Endothelial cell of umbilical vein (primary cell): ENCODE measurements at regions of chr6 and their contacts with region 1.

Region 1: DNA sequence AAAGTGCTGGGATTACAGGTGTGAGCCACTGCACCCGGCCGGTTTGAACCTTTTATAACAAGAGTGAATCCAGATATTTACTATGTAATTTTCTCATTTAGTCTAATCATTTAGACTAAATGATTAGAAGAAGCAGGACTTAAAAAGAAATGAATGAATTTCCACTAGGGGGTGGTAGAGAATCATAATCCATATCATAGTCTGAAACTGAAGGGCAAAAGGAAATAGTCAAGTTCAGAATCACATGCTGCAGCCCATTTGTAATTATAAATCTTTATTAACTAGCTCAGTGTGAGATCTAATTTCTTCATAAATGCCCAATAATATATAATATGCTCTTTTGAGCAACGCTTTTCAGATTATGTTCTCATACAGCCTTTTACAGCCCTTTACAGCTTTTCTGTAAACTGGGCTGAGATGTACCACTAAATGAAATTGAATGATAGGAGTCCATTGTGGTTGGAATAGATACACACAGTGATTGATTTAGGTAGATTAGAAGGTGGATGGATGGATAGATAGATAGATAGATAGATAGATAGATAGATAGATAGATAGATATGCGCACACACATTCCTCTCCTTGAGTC is 31.8 kb downstream of the PSMB9 start:
- DNase-seq: peak; percentile 72
- H3K4me3 ChIP-seq: no peak overlapping the region
- H3K27ac ChIP-seq: no peak overlapping the region
- H3K4me1 ChIP-seq: peaks cover under 1% of the 10 kb centered on the region
- H3K27me3 ChIP-seq: peaks cover 28 to 30% of the 10 kb centered on the region in 2 experiments
- CTCF ChIP-seq: peak; percentile 34
- POLR2A ChIP-seq: no peak

Region 2: GRCh38 chr6:32581315-32582095 is 304.3 kb before region 1 on chr6:
- CTCF ChIA-PET with region 1: no interaction called
- POLR2A ChIA-PET with region 1: no interaction called
- dilution Hi-C with region 1: no loop called
- intact Hi-C with region 1: no loop called
- DNase-seq: no peak
- H3K4me3 ChIP-seq: no peak overlapping the region
- H3K27ac ChIP-seq: no peak overlapping the region
- H3K4me1 ChIP-seq: no peaks in the 10 kb centered on the region
- H3K27me3 ChIP-seq: peaks cover 0 to 3% of the 10 kb centered on the region in 2 experiments
- CTCF ChIP-seq: no peak
- POLR2A ChIP-seq: no peak

Region 3: DNA sequence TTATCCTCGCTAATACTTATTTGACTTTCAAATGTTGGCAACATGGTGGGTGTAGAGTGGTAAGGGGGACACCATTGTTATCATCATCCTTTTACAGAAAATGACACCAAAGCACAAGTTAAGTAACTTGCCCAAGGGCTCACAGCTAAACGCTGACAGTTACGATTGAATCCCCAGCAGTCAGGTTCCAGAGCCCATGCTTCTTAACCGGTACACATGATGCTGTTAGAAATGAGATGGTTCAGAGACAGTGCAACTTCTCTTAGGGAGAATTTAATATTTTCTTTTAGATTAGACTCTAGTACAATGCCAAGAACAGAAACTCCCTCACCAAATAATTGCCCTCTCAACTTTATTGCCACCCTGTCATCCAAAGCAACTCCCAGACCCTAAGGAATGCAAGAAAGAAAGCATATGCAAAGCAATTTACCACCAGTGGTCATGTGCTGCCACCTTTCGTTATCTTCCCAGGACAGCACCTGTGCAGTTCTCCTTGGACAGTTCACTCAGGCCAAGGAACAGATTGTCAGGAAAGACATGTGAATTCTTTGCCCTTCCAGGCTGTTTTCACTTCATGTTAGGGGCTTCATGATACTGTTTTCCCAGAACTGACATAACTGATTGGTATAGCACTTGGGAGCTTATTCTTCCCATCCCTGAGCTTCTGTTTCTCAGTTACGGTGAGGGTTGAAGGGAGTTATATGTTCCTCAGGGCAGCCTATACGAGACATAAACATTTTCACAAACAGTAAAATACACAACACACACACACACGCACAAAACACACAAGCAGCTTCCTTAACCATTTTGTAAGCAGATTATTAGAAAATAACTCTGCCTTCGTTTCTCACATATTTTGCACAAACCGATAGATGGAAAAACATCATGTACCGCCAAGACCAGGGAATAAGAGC is 62.0 kb after region 1 on chr6:
- CTCF ChIA-PET with region 1: interaction called, 29 read pairs
- POLR2A ChIA-PET with region 1: no interaction called
- dilution Hi-C with region 1: no loop called
- intact Hi-C with region 1: loop called (anchors 1 kb)
- DNase-seq: peak; percentile 58
- H3K4me3 ChIP-seq: no peak overlapping the region
- H3K27ac ChIP-seq: no peak overlapping the region
- H3K4me1 ChIP-seq: no peaks in the 10 kb centered on the region
- H3K27me3 ChIP-seq: peaks cover 5 to 28% of the 10 kb centered on the region in 2 experiments
- CTCF ChIP-seq: peak; percentile 34 to 39
- POLR2A ChIP-seq: no peak

Region 4: GRCh38 chr6:33147807-33148666 is 262.2 kb after region 1 on chr6:
- CTCF ChIA-PET with region 1: no interaction called
- POLR2A ChIA-PET with region 1: no interaction called
- dilution Hi-C with region 1: no loop called
- intact Hi-C with region 1: no loop called
- DNase-seq: peak; percentile 49
- H3K4me3 ChIP-seq: no peak overlapping the region
- H3K27ac ChIP-seq: no peak overlapping the region
- H3K4me1 ChIP-seq: no peaks in the 10 kb centered on the region
- H3K27me3 ChIP-seq: peaks cover 10 to 27% of the 10 kb centered on the region in 2 experiments
- CTCF ChIP-seq: peak; percentile 66 to 69
- POLR2A ChIP-seq: no peak

Region 5: DNA sequence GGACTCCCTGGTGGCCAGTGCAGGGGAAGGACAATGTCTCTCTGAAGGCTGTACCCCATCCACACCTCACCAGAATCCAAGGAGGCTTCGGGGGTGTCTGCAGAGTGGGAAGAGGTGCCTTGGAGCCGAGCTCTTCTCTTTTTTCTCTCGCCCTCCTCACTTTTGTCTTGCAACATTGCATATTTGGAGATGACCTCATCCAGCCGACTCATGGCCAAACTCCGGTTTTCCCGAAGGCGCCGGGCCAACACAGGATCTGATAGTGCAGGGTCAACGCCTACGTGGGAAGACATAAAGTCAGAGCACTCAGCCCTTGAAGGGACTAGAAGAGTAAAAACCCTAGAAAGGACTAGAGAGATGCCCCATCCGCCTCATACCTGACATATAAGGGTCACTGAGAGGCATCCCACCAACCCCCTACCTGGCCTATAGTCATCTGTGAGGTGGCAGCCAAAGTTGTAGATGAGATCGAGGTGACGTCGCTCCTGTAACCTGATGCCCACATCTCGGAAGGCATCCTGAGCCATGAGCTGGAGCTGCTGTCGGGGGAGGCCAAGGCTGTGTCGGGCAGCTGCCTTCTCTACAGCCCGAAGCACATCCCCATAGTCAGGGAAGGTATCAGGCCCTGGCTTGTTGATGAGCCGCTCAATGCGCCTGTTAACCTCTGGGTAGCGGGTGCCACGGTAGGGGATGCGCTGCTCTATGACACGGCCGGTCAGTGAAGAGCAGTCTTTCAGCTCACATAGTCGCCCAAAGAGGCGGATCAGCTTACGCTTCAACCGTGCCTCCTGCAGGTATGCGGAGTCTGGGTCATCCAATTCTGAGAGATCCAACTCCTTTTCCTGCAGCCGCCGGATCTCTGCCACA is 434.8 kb after region 1 on chr6:
- CTCF ChIA-PET with region 1: no interaction called
- POLR2A ChIA-PET with region 1: no interaction called
- dilution Hi-C with region 1: no loop called
- intact Hi-C with region 1: no loop called
- DNase-seq: peak; percentile 66
- H3K4me3 ChIP-seq: no peak overlapping the region
- H3K27ac ChIP-seq: peak overlapping the region; percentile 76
- H3K4me1 ChIP-seq: peaks cover 53% of the 10 kb centered on the region
- H3K27me3 ChIP-seq: no peaks in the 10 kb centered on the region
- CTCF ChIP-seq: no peak
- POLR2A ChIP-seq: no peak